Heart right ventricle (tissue), 16 donors: ENCODE measurements at regions of chr4 and their contacts with region 1.

Region 1: DNA sequence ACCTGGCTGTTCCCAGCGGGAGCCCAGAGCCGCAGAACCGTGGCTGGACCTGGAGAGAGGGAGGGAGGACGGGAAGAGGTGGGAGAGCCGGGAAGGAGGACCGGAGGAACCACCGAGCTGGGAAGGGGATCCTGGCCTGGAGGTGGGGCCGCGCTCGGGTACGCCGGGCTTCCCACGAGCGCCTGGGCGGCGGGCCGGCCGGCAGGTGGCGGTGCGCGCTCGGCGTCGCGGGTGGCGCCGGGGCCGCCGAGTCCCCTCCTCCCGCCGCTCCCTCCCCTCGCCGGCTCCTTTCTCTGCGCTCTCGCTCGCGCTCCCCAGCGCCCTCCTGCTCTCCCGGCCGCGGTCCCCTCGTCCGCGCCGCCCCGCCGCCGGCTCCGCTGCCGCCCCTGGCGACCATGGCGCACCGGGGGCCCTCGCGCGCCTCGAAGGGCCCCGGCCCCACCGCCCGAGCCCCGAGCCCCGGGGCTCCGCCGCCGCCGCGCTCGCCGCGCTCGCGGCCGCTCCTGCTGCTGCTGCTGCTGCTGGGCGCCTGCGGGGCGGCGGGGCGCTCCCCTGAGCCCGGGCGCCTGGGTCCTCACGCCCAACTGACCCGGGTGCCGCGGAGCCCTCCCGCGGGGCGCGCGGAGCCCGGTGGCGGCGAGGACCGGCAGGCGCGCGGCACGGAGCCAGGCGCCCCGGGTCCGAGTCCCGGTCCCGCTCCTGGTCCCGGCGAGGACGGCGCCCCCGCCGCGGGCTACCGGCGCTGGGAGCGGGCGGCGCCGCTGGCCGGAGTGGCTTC is at the start of gene SORCS2:
- DNase-seq: peak; percentile 53 to 74
- ATAC-seq: peak; percentile 65 to 92 (median 80)
- H3K4me3 ChIP-seq: peak within 1 kb of the TSS; percentile 14 to 52 (median 44)
- H3K27ac ChIP-seq: no peak within 1 kb of the TSS
- H3K4me1 ChIP-seq: peaks cover 4 to 18% (median 13%) of the 10 kb centered on the region in 9 donors
- H3K27me3 ChIP-seq: peaks cover 7 to 83% (median 63%) of the 10 kb centered on the region in 7 donors
- CTCF ChIP-seq: peak; percentile 44 to 87 (median 64)
- total RNA-seq, gene SORCS2: 0.95 to 5.4 (median 2.6) TPM

Region 2: DNA sequence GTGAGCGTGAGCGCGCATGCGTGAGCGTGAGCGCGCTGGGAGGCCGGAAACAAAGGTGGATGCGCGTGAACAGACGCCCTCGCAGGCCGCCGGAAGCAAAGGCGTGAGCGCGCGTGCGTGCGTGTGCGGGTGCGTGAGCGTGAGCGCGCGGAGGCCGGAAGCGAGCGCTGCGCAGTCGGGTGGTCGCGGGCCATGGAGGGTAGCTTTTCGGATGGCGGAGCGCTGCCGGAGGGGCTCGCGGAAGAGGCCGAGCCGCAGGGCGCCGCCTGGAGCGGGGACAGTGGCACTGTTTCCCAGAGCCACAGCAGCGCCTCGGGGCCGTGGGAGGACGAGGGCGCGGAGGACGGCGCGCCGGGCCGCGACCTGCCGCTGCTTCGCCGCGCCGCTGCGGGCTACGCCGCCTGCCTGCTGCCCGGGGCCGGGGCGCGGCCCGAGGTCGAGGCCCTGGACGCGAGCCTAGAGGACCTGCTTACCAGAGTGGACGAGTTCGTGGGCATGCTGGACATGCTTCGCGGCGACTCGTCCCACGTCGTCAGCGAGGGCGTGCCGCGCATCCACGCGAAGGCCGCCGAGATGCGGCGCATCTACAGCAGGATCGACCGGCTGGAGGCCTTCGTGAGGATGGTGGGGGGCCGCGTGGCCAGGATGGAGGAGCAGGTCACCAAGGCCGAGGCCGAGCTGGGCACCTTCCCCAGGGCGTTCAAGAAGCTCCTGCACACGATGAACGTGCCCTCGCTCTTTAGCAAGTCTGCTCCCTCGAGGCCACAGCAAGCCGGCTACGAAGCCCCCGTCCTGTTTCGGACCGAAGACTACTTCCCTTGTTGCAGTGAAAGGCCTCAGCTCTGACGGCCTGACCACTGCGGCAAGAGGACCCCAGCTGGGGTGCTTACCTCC is 476.2 kb before region 1 on chr4 and contains the start of gene BLOC1S4:
- intact Hi-C with region 1: no loop called
- DNase-seq: peak; percentile 87 to 90
- ATAC-seq: peak; percentile 91 to 96 (median 94)
- H3K4me3 ChIP-seq: peak within 1 kb of the TSS; percentile 55 to 88 (median 76)
- H3K27ac ChIP-seq: peak within 1 kb of the TSS; percentile 87 to 98 (median 94)
- H3K4me1 ChIP-seq: peaks cover 0 to 40% (median 30%) of the 10 kb centered on the region in 9 donors
- H3K27me3 ChIP-seq: no peaks in the 10 kb centered on the region
- CTCF ChIP-seq: peak in 4 of 9 donors; percentile 19 to 53 (median 30)
- total RNA-seq, gene BLOC1S4: 4.4 to 10.2 (median 7.0) TPM

Region 3: DNA sequence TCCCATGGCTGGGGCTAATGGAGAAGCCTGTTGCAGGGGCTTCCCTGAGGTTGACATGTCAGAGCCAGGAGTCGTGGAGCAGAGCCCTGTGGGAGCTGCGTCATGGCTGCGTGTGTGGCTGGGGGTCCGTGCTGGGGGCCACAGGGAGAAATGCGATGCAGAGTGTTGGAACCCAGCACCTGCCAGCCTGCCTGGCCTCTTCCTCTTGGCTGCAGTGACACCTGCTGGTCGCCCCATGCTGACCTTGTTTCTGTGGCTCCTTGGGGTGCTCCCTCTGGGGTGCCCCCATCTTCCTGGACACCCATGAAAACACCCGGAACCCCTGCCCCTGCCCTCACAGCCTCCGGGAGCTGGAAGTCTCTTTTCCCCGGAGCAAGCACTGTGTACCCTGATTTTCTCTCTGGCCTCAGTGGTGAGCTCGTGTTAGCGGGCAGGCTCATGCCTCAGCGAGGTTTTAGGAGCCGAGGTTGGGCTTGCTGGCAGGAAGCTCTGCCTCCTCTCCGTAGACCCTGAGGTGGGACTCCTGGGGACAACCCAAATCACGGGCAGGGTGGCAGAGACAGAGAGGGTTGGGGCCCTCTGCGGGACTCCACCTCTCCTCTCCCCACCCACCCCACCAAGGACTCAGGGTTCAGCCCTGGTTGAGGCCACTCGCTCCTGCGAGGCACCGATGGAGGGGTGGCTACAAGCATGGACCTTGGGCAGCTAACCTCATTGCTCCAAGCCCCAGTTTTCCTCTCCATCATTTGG is 103.6 kb after region 1 on chr4:
- intact Hi-C with region 1: loop called (anchors 1 to 5 kb)
- DNase-seq: peak; percentile 22 to 44
- ATAC-seq: peak; percentile 39 to 72 (median 57)
- H3K4me3 ChIP-seq: peak overlapping the region in 1 of 10 donors; percentile 24
- H3K27ac ChIP-seq: no peak overlapping the region
- H3K4me1 ChIP-seq: peaks cover 4 to 19% (median 14%) of the 10 kb centered on the region in 9 donors
- H3K27me3 ChIP-seq: peaks cover 0 to 14% (median 0%) of the 10 kb centered on the region in 7 donors
- CTCF ChIP-seq: peak; percentile 30 to 80 (median 65)

Region 4: GRCh38 chr4:7335344-7336069 is 143.1 kb after region 1 on chr4:
- intact Hi-C with region 1: loop called in 1 of 10 experiments (anchors 2 kb)
- DNase-seq: peak; percentile 39 to 67
- ATAC-seq: peak in 7 of 8 donors; percentile 43 to 64 (median 55)
- H3K4me3 ChIP-seq: no peak overlapping the region
- H3K27ac ChIP-seq: no peak overlapping the region
- H3K4me1 ChIP-seq: peaks cover 0 to 28% (median 0%) of the 10 kb centered on the region in 9 donors
- H3K27me3 ChIP-seq: no peaks in the 10 kb centered on the region
- CTCF ChIP-seq: peak; percentile 41 to 72 (median 63)

Region 5: GRCh38 chr4:7423801-7424552 is 231.5 kb after region 1 on chr4:
- intact Hi-C with region 1: no loop called
- DNase-seq: no peak
- ATAC-seq: no peak
- H3K4me3 ChIP-seq: no peak overlapping the region
- H3K27ac ChIP-seq: no peak overlapping the region
- H3K4me1 ChIP-seq: no peaks in the 10 kb centered on the region
- H3K27me3 ChIP-seq: no peaks in the 10 kb centered on the region
- CTCF ChIP-seq: no peak

Region 6: DNA sequence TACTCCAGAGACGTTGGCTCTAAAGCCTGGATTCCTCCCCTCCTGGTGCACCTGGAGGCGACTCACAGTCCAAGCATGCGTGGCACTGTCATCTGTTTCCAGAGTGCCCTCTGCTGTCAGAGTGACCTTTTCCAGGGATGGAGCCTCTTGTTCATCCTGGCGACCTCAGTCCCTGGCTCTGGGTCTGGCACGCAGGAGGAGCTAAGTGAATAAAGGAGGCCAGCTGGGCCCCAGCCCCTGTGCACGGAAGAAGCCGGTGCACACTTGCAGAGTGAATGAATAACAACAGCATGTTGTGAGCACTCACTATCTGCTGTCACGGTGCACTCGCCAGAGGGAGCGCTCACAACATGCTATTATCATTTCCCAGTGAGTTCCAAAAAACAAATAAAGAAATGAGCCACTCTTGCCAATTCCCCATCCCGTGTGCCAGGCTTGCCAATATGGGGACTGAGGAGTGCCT is 270.1 kb after region 1 on chr4:
- intact Hi-C with region 1: loop called in 1 of 10 experiments (anchors 10 kb)
- DNase-seq: peak in 1 of 2 donors; percentile 30
- ATAC-seq: peak; percentile 23 to 79 (median 58)
- H3K4me3 ChIP-seq: no peak overlapping the region
- H3K27ac ChIP-seq: no peak overlapping the region
- H3K4me1 ChIP-seq: peaks cover 0 to 22% (median 8%) of the 10 kb centered on the region in 9 donors
- H3K27me3 ChIP-seq: peaks cover 0 to 6% (median 0%) of the 10 kb centered on the region in 7 donors
- CTCF ChIP-seq: peak in 6 of 9 donors; percentile 30 to 61 (median 46)